Endothelial cell of umbilical vein (primary cell): ENCODE measurements at regions of chr3 and their contacts with region 1.

Region 1: DNA sequence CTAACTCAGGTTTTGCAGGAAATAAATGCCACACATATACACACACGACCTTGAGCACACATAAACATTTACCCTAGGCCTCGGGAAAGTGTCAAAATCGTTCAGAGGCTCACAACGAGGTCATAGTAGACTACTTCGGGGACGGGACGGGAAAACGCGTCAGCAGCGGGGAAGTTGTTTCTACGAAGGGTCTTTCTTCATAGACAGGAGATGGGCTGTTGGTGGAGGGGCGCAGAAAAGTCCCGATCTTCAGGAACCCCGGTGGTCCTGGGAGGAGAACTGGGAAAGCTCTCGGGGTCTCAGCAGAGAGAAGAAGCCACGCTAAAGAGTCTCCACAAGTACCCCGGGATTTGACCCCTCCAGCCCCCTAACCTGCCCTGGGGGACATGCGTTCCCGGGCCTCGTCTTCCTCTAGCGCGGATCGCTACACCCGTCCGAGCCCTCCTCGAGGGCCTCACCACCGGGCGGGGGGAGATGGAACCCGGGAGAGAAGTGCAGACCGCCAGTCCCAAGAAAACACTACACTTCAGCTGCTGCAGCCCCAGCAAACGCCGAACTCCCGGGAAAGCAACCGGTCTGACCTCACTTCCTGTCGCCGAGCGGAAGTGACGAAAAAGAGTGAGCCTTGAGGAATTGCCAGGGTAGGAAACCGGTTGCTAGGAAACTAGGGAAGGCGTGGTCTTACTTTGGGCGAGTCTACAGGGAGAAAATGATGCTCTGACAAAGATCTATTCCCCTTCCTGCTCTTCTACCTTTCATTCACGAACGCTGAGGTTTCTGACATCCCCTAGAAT is at the start of gene PIK3R4:
- DNase-seq: peak; percentile 98
- H3K4me3 ChIP-seq: peak within 1 kb of the TSS; percentile 34 to 99 (median 88)
- H3K27ac ChIP-seq: peak within 1 kb of the TSS; percentile 82
- H3K4me1 ChIP-seq: peaks cover 19% of the 10 kb centered on the region
- H3K27me3 ChIP-seq: no peaks in the 10 kb centered on the region
- CTCF ChIP-seq: no peak
- POLR2A ChIP-seq: peak; percentile 85
- total RNA-seq, gene PIK3R4: 23.0 and 26.3 TPM in 2 replicates

Region 2: GRCh38 chr3:130692455-130692854 is 54.0 kb before region 1 on chr3:
- CTCF ChIA-PET with region 1: no interaction called
- POLR2A ChIA-PET with region 1: no interaction called
- dilution Hi-C with region 1: no loop called
- intact Hi-C with region 1: loop called (anchors 2 kb)
- DNase-seq: peak; percentile 94
- H3K4me3 ChIP-seq: no peak overlapping the region
- H3K27ac ChIP-seq: peak overlapping the region; percentile 92
- H3K4me1 ChIP-seq: peaks cover 15% of the 10 kb centered on the region
- H3K27me3 ChIP-seq: no peaks in the 10 kb centered on the region
- CTCF ChIP-seq: no peak
- POLR2A ChIP-seq: no peak

Region 3: GRCh38 chr3:130699765-130700164 is 46.7 kb before region 1 on chr3:
- CTCF ChIA-PET with region 1: no interaction called
- POLR2A ChIA-PET with region 1: no interaction called
- dilution Hi-C with region 1: no loop called
- intact Hi-C with region 1: loop called (anchors 1 kb)
- DNase-seq: peak; percentile 33
- H3K4me3 ChIP-seq: no peak overlapping the region
- H3K27ac ChIP-seq: peak overlapping the region; percentile 71
- H3K4me1 ChIP-seq: peaks cover 9% of the 10 kb centered on the region
- H3K27me3 ChIP-seq: no peaks in the 10 kb centered on the region
- CTCF ChIP-seq: peak in 1 of 2 donors; percentile 14
- POLR2A ChIP-seq: no peak

Region 4: GRCh38 chr3:130725746-130726145 is 20.7 kb before region 1 on chr3:
- CTCF ChIA-PET with region 1: interaction called, 4 read pairs
- POLR2A ChIA-PET with region 1: interaction called, 11 read pairs
- dilution Hi-C with region 1: no loop called
- intact Hi-C with region 1: loop called (anchors 1 kb)
- DNase-seq: no peak
- H3K4me3 ChIP-seq: no peak overlapping the region
- H3K27ac ChIP-seq: no peak overlapping the region
- H3K4me1 ChIP-seq: peaks cover 11% of the 10 kb centered on the region
- H3K27me3 ChIP-seq: no peaks in the 10 kb centered on the region
- CTCF ChIP-seq: no peak
- POLR2A ChIP-seq: no peak

Region 5: GRCh38 chr3:131026321-131027178 is 280.1 kb after region 1 on chr3 and contains the starts of genes ASTE1 and NEK11:
- CTCF ChIA-PET with region 1: no interaction called
- POLR2A ChIA-PET with region 1: no interaction called
- dilution Hi-C with region 1: no loop called
- intact Hi-C with region 1: loop called (anchors 10 kb)
- DNase-seq: peak; percentile 84
- H3K4me3 ChIP-seq: peak within 1 kb of the TSS; percentile 44 to 72 (median 54)
- H3K27ac ChIP-seq: peak within 1 kb of the TSS; percentile 91
- H3K4me1 ChIP-seq: peaks cover 15% of the 10 kb centered on the region
- H3K27me3 ChIP-seq: no peaks in the 10 kb centered on the region
- CTCF ChIP-seq: no peak
- POLR2A ChIP-seq: peak; percentile 88
- total RNA-seq, gene ASTE1: 5.8 and 6.7 TPM in 2 replicates
- total RNA-seq, gene NEK11: 3.1 and 4.3 TPM in 2 replicates